Sigmoid colon (tissue), 7 donors: ENCODE measurements at regions of chr7 and their contacts with region 1.

Region 1: DNA sequence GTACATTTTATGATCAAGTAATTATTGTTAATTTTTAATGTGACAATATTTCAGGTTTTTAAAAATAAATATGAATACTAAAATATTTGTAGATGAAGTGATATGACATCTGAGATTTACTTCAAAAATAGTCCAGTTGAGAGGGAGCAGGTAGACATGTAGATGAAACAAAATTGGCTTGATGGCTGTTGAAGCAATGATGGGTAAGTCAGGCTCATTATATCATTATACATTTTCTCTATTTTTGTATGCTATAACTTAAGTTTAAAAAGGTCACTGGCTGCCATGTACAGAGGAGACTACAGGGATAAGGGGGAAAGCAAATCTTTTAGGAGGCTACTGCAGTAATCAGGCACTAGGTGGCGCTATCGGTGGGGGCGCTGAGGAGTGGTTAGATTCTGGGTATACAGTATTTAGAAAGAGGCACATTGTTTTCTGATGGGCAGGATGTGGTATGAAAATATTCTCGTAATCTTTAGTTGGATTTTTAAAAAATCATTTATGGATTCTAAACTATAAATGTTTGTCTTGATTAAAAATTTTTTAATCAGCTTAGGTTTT is 189.8 kb upstream of the IMMP2L start:
- DNase-seq: no peak
- H3K4me3 ChIP-seq: no peak overlapping the region
- H3K27ac ChIP-seq: no peak overlapping the region
- H3K4me1 ChIP-seq: no peaks in the 10 kb centered on the region
- H3K27me3 ChIP-seq: no peaks in the 10 kb centered on the region
- CTCF ChIP-seq: peak in 3 of 4 experiments; percentile 34 to 48 (median 47)
- EP300 ChIP-seq: no peak
- POLR2A ChIP-seq: no peak

Region 2: GRCh38 chr7:111867348-111867931 is 115.3 kb after region 1 on chr7:
- intact Hi-C with region 1: loop called (anchors 10 kb)
- DNase-seq: no peak
- H3K4me3 ChIP-seq: no peak overlapping the region
- H3K27ac ChIP-seq: peak overlapping the region in 1 of 4 donors; percentile 11
- H3K4me1 ChIP-seq: peaks cover 0 to 16% (median 7%) of the 10 kb centered on the region in 4 donors
- H3K27me3 ChIP-seq: no peaks in the 10 kb centered on the region
- CTCF ChIP-seq: no peak
- EP300 ChIP-seq: no peak
- POLR2A ChIP-seq: no peak

Region 3: DNA sequence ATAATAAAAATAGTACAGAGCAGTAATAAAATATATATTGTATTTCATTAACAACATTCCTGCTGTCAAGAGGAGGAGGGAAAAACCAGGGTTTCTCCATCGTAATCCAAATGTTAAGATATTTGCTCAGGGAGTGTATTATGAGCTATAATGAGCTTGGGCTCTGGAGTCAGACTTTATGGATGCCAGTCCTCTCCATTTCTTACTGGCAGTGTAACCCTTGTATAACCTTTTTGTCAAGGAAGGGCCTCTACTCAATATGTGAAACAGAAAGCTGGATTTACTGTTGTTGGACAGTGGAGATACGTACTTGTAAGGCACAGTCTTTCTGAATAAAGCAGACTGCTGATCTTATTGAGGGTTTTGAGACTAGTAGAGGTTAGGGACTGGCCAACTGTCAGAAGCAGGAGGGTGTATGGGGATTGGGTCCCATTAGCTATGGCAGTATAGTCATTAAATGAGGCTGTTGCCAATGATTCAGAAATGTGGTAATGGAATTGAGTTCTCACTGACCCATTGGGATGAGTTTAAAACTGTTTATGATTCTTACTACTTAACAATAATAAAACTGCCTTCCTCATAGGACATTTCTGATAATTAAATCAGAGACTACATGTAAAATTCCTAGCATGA is 510.9 kb after region 1 on chr7:
- intact Hi-C with region 1: no loop called
- DNase-seq: no peak
- H3K4me3 ChIP-seq: no peak overlapping the region
- H3K27ac ChIP-seq: peak overlapping the region in 2 of 4 donors; percentile 9 to 48
- H3K4me1 ChIP-seq: peaks cover 0 to 23% (median 21%) of the 10 kb centered on the region in 4 donors
- H3K27me3 ChIP-seq: no peaks in the 10 kb centered on the region
- CTCF ChIP-seq: no peak
- EP300 ChIP-seq: no peak
- POLR2A ChIP-seq: no peak